Esophagus muscularis mucosa (tissue), 4 donors: ENCODE measurements at regions of chr15 and their contacts with region 1.

Region 1: GRCh38 chr15:101499863-101500713 is 10.6 kb upstream of the PCSK6 start:
- DNase-seq: peak; percentile 89
- H3K4me3 ChIP-seq: no peak overlapping the region
- H3K27ac ChIP-seq: no peak overlapping the region
- H3K4me1 ChIP-seq: peaks cover 9 to 26% (median 18%) of the 10 kb centered on the region in 4 donors
- H3K27me3 ChIP-seq: peaks cover 0 to 51% (median 3%) of the 10 kb centered on the region in 4 donors
- CTCF ChIP-seq: no peak
- EP300 ChIP-seq: no peak
- POLR2A ChIP-seq: no peak

Region 2: GRCh38 chr15:100468285-100468684 is 1031.8 kb before region 1 on chr15:
- intact Hi-C with region 1: no loop called
- DNase-seq: no peak
- H3K4me3 ChIP-seq: no peak overlapping the region
- H3K27ac ChIP-seq: no peak overlapping the region
- H3K4me1 ChIP-seq: peaks cover 0 to 21% (median 11%) of the 10 kb centered on the region in 4 donors
- H3K27me3 ChIP-seq: no peaks in the 10 kb centered on the region
- CTCF ChIP-seq: no peak
- EP300 ChIP-seq: no peak
- POLR2A ChIP-seq: no peak

Region 3: GRCh38 chr15:101303408-101303807 is 196.7 kb before region 1 on chr15:
- intact Hi-C with region 1: loop called (anchors 5 kb)
- DNase-seq: no peak
- H3K4me3 ChIP-seq: no peak overlapping the region
- H3K27ac ChIP-seq: no peak overlapping the region
- H3K4me1 ChIP-seq: peaks cover 0 to 5% (median 2%) of the 10 kb centered on the region in 4 donors
- H3K27me3 ChIP-seq: peaks cover 0 to 19% (median 0%) of the 10 kb centered on the region in 4 donors
- CTCF ChIP-seq: no peak
- EP300 ChIP-seq: no peak
- POLR2A ChIP-seq: no peak

Region 4: GRCh38 chr15:101795455-101795854 is 295.4 kb after region 1 on chr15:
- intact Hi-C with region 1: no loop called
- DNase-seq: no peak
- H3K4me3 ChIP-seq: no peak overlapping the region
- H3K27ac ChIP-seq: no peak overlapping the region
- H3K4me1 ChIP-seq: no peaks in the 10 kb centered on the region
- H3K27me3 ChIP-seq: peaks cover 0 to 3% (median 0%) of the 10 kb centered on the region in 4 donors
- CTCF ChIP-seq: no peak
- EP300 ChIP-seq: no peak
- POLR2A ChIP-seq: no peak